Ascending aorta (tissue), 2 donors: ENCODE measurements at regions of chr18 and their contacts with region 1.

Region 1: DNA sequence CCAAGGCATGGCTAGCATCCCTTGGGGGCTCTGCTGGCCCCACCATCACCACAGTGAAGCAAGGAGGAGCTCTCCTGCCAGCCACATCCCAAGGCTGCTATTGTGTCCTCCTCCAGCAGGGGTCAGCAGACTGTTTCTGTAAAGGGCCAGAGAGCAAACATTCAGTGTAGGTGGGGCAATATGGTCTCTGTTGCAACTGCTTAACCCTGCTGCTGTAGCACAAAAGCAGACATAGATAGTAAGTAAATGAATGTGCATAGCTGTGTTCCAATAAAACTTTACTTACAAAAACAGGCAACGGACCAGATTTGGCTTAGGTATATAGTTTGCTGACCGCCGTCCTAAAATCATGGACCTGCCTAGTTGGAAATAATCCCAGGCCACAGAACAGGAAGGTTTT is 36.4 kb upstream of the ZBTB7C start:
- DNase-seq: peak; percentile 37 to 90
- H3K4me3 ChIP-seq: no peak overlapping the region
- H3K27ac ChIP-seq: no peak overlapping the region
- H3K4me1 ChIP-seq: peaks cover 8 to 26% of the 10 kb centered on the region in 2 donors
- H3K27me3 ChIP-seq: no peaks in the 10 kb centered on the region
- CTCF ChIP-seq: peak; percentile 70 to 93 (median 85)

Region 2: GRCh38 chr18:48161191-48161910 is 284.2 kb before region 1 on chr18:
- intact Hi-C with region 1: loop called (anchors 5 kb)
- DNase-seq: peak in 1 of 2 donors; percentile 88
- H3K4me3 ChIP-seq: peak overlapping the region; percentile 67 to 93
- H3K27ac ChIP-seq: peak overlapping the region; percentile 86 to 94
- H3K4me1 ChIP-seq: peaks cover 2 to 12% of the 10 kb centered on the region in 2 donors
- H3K27me3 ChIP-seq: no peaks in the 10 kb centered on the region
- CTCF ChIP-seq: no peak

Region 3: DNA sequence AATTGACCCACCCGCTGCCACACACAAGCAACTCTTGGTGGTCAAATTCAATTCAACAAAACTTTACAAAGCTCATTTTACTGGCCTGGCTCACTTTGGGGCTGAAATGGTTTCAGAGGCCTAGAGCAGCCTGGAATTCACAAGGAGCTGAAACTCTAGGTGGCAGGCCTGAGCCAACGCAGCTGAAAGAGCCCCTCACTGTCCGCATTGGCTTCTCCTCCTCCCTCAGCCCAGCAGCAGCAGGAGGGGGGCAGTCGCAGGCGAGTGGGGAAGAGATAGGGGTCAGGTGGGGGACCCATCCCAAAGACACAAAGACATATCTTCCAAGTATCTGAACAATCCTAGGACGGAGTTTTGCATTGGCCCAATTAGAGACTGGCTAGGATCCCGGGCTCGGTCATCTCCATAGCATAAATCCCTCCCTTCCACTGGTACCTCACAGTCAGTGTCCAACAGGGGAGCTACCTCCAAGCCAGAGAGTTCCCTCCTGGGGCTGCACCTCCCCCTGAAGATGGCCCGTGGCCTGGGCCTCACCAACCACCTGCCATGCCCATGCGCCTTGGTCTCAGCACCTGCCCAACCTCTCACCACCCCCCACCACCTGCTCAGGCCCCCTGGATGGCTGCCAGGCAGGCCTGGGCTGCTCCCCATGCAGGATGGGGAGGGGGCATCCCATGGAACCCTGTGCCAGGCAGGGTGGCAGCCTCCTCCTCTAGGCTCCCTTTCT is 149.8 kb before region 1 on chr18:
- intact Hi-C with region 1: loop called (anchors 5 kb)
- DNase-seq: peak in 1 of 2 donors; percentile 60
- H3K4me3 ChIP-seq: no peak overlapping the region
- H3K27ac ChIP-seq: peak overlapping the region in 1 of 2 donors; percentile 34
- H3K4me1 ChIP-seq: peaks cover 6 to 12% of the 10 kb centered on the region in 2 donors
- H3K27me3 ChIP-seq: no peaks in the 10 kb centered on the region
- CTCF ChIP-seq: peak in 1 of 3 experiments; percentile 32

Region 4: DNA sequence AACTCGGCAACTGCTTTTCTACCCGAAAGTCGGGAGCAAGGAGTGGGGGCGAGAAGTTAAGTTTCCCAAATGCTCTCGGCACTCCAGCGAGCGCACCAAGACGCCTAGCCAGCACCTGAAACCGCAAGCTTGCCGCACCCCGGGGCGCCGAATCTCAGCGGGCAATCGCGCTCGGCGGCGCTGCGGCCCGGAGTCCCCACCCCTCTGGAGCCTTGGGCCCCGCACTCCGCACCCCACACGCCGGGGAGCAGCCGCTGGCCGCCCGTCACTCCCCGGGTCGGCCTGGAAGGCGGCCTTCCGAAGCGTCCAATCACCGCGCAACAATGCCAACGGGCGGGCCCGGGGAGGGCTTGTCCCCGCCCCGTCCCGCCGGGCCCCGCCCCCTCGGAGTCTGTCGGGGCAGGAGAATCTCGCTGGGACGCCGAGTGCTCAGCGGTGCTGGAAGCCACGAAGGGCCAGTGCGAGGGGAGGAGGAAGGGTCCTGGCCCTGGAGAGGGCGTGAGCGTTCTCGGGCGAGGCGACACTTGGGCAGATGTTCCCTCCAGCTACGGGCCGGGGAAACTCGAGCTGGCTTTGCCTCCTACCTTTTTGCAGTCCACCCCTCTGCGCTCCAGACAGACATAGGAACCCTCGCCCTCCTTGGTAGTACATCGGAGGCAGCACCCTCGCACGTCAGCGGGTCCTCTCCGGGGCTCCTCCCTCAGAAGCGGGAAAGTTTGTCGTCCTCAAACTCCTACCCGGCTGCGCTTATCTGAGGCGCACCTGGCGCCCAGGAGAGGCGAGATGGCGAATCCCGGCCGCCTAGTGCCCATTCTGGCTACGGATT is 35.2 kb before region 1 on chr18:
- intact Hi-C with region 1: loop called (anchors 1 kb)
- DNase-seq: peak; percentile 62 to 95
- H3K4me3 ChIP-seq: peak overlapping the region; percentile 95 to 98
- H3K27ac ChIP-seq: peak overlapping the region; percentile 91 to 92
- H3K4me1 ChIP-seq: peaks cover 4 to 13% of the 10 kb centered on the region in 2 donors
- H3K27me3 ChIP-seq: no peaks in the 10 kb centered on the region
- CTCF ChIP-seq: no peak